H1 (cell line): ENCODE measurements at regions of chr2 and their contacts with region 1.

Region 1: DNA sequence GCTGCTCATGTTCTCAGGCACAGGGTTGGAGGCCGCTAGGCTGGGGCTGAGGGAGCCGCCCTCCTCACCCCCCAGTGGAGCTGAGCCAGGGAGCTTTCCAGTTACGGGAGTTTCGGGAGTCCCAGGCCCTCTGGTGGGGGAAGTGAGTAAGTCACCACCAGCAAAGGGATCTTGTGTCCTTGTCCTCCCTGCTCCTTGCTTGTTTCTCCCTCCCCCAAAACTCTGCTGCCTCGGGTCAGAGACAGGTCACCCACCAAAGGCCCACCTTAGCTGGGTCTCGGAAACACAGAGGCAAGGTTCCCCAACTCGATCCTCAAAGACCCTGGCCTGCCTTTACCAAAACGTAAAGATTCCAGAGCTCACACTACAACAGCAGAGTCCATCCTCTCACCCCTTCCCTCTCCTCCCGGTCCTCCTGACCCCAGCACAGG is 60.5 kb upstream of the POMC start:
- DNase-seq: peak; percentile 80 to 84
- H3K4me3 ChIP-seq: no peak overlapping the region
- H3K27ac ChIP-seq: no peak overlapping the region; the same call in 1 of the 2 replicates
- H3K4me1 ChIP-seq: peaks cover 0 to 15% (median 12%) of the 10 kb centered on the region in 4 experiments; a peak in 5 of 7 replicates
- H3K27me3 ChIP-seq: no peaks in the 10 kb centered on the region
- CTCF ChIP-seq: peak; percentile 78 to 98 (median 96)
- EP300 ChIP-seq: no peak; a peak in 1 of 3 replicates
- POLR2A ChIP-seq: 0 out of 3 replicates have a peak, but pooled peaks of 1 of the 2 experiments have one; percentile 35
- RAD21 ChIP-seq: peak; percentile 59 to 74

Region 2: DNA sequence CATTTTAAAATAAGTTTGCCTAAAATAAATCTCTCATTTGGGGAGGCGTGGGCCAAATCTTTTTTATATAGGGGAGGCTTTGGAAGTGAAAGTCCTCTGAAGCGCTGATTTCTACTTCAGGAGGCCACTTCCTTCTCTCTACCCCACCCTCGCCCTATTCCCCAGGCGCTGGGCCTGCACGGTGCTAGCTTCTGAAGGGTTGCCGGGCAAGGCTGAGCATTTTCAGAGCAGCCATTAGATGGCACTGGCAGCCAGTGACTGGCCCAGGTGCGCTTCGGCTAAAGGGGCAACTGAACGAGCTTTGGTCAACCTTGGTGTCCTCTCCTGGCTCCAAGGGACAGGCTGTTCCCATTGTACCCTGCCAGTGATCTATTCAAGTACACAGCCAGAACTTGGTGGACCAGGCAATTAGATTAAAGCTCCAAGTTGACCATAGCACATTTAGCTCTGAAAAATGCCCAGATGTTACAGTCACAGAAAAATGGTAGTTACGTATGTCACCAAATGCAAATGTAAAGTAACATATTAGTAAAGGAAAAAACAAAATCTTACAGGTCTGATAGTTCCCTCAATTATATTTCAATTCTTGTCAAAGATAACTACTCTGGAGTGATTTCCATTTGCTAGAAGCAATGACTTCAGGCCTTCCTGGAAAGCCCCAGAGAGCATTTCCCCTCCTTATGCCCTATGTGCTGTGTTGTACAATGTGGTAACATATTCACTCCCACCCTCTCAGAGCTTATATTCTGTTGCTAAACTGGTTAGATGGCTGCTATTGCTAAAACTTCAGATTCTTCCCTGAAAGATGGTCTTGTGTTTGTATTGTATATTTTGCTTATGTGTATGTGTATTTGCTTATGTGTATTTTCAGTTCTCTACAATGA is 62.6 kb before region 1 on chr2:
- CTCF ChIA-PET with region 1: interaction called, 18 read pairs
- POLR2A ChIA-PET with region 1: interaction called, 8 read pairs
- DNase-seq: peak in 1 of 2 experiments; percentile 65
- H3K4me3 ChIP-seq: no peak overlapping the region
- H3K27ac ChIP-seq: no peak overlapping the region
- H3K4me1 ChIP-seq: peaks cover 0 to 5% (median 4%) of the 10 kb centered on the region in 4 experiments; a peak in 5 of 7 replicates
- H3K27me3 ChIP-seq: peaks cover 14 to 45% (median 41%) of the 10 kb centered on the region in 4 experiments
- CTCF ChIP-seq: peak; percentile 66 to 82 (median 79)
- EP300 ChIP-seq: no peak; a peak in 1 of 3 replicates
- POLR2A ChIP-seq: no peak
- RAD21 ChIP-seq: peak; percentile 82 to 87

Region 3: GRCh38 chr2:25207078-25207545 is 21.8 kb before region 1 on chr2:
- CTCF ChIA-PET with region 1: interaction called, 22 read pairs
- POLR2A ChIA-PET with region 1: interaction called, 4 read pairs
- DNase-seq: peak in 1 of 2 experiments; percentile 61
- H3K4me3 ChIP-seq: no peak overlapping the region
- H3K27ac ChIP-seq: peak overlapping the region; percentile 60
- H3K4me1 ChIP-seq: peaks cover 0 to 9% (median 3%) of the 10 kb centered on the region in 4 experiments; a peak in 4 of 7 replicates
- H3K27me3 ChIP-seq: no peaks in the 10 kb centered on the region
- CTCF ChIP-seq: no peak
- EP300 ChIP-seq: no peak
- POLR2A ChIP-seq: no peak
- RAD21 ChIP-seq: no peak

Region 4: GRCh38 chr2:25246558-25247290 is 17.9 kb after region 1 on chr2:
- CTCF ChIA-PET with region 1: interaction called, 66 read pairs
- POLR2A ChIA-PET with region 1: interaction called, 154 read pairs
- DNase-seq: no peak
- H3K4me3 ChIP-seq: no peak overlapping the region
- H3K27ac ChIP-seq: no peak overlapping the region
- H3K4me1 ChIP-seq: peaks cover 8 to 17% (median 11%) of the 10 kb centered on the region in 4 experiments
- H3K27me3 ChIP-seq: no peaks in the 10 kb centered on the region
- CTCF ChIP-seq: no peak
- EP300 ChIP-seq: no peak
- POLR2A ChIP-seq: no peak
- RAD21 ChIP-seq: no peak

Region 5: GRCh38 chr2:25276569-25277465 is 48.0 kb after region 1 on chr2:
- CTCF ChIA-PET with region 1: interaction called, 22 read pairs
- POLR2A ChIA-PET with region 1: interaction called, 18 read pairs
- DNase-seq: peak in 1 of 2 experiments; percentile 94
- H3K4me3 ChIP-seq: peak overlapping the region; percentile 13 to 59 (median 26); a peak in 6 of 8 replicates
- H3K27ac ChIP-seq: no peak overlapping the region
- H3K4me1 ChIP-seq: peaks cover 3 to 33% (median 16%) of the 10 kb centered on the region in 4 experiments
- H3K27me3 ChIP-seq: no peaks in the 10 kb centered on the region
- CTCF ChIP-seq: peak; percentile 70 to 87 (median 71)
- EP300 ChIP-seq: no peak
- POLR2A ChIP-seq: no peak
- RAD21 ChIP-seq: peak; percentile 22 to 66; a peak in 3 of 4 replicates